Heart right ventricle (tissue), 16 donors: ENCODE measurements at regions of chr5 and their contacts with region 1.

Region 1: GRCh38 chr5:64811050-64811640 is 42.4 kb downstream of the CWC27 start:
- DNase-seq: peak in 1 of 2 donors; percentile 11
- ATAC-seq: peak in 4 of 8 donors; percentile 28 to 61 (median 35)
- H3K4me3 ChIP-seq: no peak overlapping the region
- H3K27ac ChIP-seq: no peak overlapping the region
- H3K4me1 ChIP-seq: peaks cover 0 to 18% (median 5%) of the 10 kb centered on the region in 9 donors
- H3K27me3 ChIP-seq: no peaks in the 10 kb centered on the region
- CTCF ChIP-seq: peak; percentile 52 to 85 (median 74)

Region 2: DNA sequence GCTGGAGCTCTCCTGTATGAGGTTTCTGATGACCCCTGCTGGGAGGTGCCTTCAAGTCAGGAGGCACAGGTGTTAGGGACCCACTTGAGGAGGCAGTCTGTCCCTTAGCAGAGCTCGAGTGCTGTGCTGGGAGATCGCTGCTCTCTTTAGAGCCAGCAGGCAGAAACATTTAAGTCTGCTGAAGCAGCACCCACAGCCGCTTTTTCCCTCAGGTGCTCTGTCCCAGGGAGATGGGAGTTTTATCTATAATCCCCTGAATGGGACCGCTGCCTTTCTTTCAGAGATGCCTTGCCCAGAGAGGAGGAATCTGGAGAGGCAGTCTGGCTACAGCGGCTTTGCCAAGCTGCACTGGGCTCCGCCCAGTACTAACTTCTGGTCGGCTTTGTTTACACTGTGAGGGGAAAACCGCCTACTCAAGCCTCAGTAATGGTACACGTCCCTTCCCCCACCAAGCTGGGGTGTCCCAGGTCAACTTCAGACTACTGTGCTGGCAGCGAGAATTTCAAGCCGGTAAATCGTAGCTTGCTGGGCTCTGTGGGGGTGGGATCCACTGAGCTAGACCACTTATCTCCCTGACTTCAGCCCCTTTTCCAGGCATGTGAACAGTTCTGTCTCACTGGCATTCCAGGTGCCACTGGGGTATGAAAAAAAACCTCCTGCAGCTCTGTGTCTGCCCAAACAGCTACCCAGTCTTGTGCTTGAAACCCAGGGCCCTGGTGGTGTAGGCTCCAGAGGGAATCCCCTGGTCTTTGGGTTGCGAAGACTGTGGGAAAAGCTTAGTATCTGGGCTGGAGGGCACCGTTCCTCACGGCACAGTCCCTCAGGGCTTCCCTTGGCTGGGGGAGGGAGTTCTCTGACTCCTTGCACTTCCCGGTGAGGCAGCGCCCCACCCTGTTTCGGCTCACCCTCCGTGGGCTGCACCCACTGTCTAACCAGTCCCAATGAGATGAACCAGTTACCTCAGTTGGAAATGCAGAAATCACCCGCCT is 128.7 kb after region 1 on chr5:
- intact Hi-C with region 1: loop called in 3 of 10 experiments (anchors 10 kb)
- DNase-seq: peak; percentile 14 to 21
- ATAC-seq: peak in 4 of 8 donors; percentile 37 to 62 (median 47)
- H3K4me3 ChIP-seq: no peak overlapping the region
- H3K27ac ChIP-seq: no peak overlapping the region
- H3K4me1 ChIP-seq: no peaks in the 10 kb centered on the region
- H3K27me3 ChIP-seq: no peaks in the 10 kb centered on the region
- CTCF ChIP-seq: no peak

Region 3: DNA sequence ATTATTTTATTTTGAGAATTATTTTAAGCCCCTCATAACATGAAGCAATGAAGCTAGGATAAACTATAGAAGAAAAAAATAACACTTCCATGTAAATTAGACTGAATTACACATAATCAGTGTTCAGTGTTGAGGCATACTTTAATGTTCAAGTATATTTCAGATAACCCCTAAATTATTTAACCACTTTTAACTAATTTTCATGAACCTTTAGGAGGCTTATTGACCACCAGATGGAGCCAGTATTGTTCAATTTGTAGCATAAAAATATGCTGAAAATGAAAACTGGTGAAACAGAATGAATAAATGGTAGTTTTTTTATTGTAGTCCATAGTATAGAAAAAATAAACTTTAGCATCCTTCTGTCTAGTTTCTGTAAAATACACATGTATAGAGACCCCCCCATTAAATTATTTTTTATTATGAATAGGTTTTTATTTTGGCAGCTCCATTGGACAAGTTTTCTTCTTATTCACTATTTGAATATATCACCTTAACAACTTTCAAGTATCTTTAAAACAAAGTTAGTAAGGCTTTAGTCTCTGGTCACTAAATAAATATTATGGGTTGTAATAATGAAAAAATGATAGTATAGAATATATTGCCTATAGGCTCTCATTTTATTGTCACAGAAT is 147.7 kb after region 1 on chr5:
- intact Hi-C with region 1: loop called in 2 of 10 experiments (anchors 2 to 10 kb)
- DNase-seq: no peak
- ATAC-seq: no peak
- H3K4me3 ChIP-seq: no peak overlapping the region
- H3K27ac ChIP-seq: no peak overlapping the region
- H3K4me1 ChIP-seq: no peaks in the 10 kb centered on the region
- H3K27me3 ChIP-seq: no peaks in the 10 kb centered on the region
- CTCF ChIP-seq: peak; percentile 13 to 78 (median 57)

Region 4: GRCh38 chr5:65035211-65036206 is 224.4 kb after region 1 on chr5:
- intact Hi-C with region 1: loop called in 1 of 10 experiments (anchors 5 kb)
- DNase-seq: peak; percentile 90 to 91
- ATAC-seq: peak; percentile 94 to 97 (median 95)
- H3K4me3 ChIP-seq: peak overlapping the region; percentile 41 to 82 (median 70)
- H3K27ac ChIP-seq: peak overlapping the region; percentile 79 to 99 (median 96)
- H3K4me1 ChIP-seq: peaks cover 18 to 55% (median 39%) of the 10 kb centered on the region in 9 donors
- H3K27me3 ChIP-seq: no peaks in the 10 kb centered on the region
- CTCF ChIP-seq: peak in 2 of 9 donors; percentile 8 to 16